ENCODE measurements at regions of chr1 and their contacts with region 1.

Region 1: GRCh38 chr1:212035123-212035834 is at the starts of genes DTL and INTS7:
- DNase-seq: peak; percentile 99 to 100 (median 99)
- H3K4me3 ChIP-seq: peak within 1 kb of the TSS; percentile 84 to 99 (median 95)
- H3K27ac ChIP-seq: peak within 1 kb of the TSS; percentile 72 to 90
- H3K4me1 ChIP-seq: peaks cover 8 to 48% (median 29%) of the 10 kb centered on the region in 4 experiments
- H3K27me3 ChIP-seq: no peaks in the 10 kb centered on the region

Region 2: GRCh38 chr1:211680752-211681327 is 354.4 kb before region 1 on chr1:
- CTCF ChIA-PET with region 1: interaction called, 25 read pairs
- POLR2A ChIA-PET with region 1: interaction called, 4 read pairs
- DNase-seq: peak; percentile 87 to 94 (median 93)
- H3K4me3 ChIP-seq: no peak overlapping the region
- H3K27ac ChIP-seq: no peak overlapping the region
- H3K4me1 ChIP-seq: peaks cover 0 to 4% (median 2%) of the 10 kb centered on the region in 4 experiments
- H3K27me3 ChIP-seq: peaks cover 0 to 2% (median 0%) of the 10 kb centered on the region in 5 experiments

Region 3: DNA sequence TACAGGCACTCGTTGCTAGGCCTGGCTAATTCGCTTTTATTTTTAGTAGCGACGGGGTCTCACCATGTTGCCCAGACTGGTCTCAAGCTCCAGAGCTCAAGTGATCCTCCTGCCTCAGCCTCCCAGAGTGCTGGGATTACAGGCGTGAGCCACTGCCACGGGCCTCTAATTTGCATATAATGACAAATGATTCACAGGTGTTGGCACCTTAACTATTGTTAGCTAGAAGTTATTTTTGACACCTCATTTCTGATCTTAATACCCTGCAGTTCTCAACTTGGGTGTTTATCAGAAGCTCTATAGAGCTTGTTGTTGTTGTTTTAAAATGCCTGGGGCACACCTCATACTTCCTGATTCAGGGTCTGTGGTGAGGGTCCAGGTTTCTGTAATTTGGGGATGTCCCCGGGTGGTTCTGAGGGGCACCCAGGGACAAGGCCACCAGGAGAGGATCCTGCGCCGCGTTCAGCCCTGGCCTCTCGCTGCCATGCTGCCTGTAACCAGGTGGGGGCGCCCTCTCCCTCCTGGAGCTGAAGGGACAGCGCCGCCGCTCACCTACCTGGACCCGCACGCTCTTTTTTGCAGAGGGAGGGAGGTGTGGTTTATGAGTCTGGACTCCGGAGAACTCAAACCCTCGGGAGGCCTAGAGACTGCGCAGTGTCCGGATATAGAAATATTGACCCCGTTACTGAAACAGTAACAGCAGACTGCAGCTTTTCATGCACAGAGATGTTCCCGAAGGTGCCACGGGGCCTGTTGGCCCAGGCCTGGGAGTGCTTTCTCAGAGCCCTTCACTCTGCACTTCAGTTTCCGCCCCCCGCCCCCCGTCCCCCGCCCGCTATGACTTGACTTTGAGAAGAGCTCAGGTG is 336.9 kb before region 1 on chr1:
- CTCF ChIA-PET with region 1: interaction called, 20 read pairs
- POLR2A ChIA-PET with region 1: no interaction called
- DNase-seq: peak; percentile 64 to 79 (median 77)
- H3K4me3 ChIP-seq: peak overlapping the region in 5 of 7 experiments; percentile 23 to 70 (median 51)
- H3K27ac ChIP-seq: no peak overlapping the region
- H3K4me1 ChIP-seq: peaks cover 0 to 25% (median 15%) of the 10 kb centered on the region in 4 experiments
- H3K27me3 ChIP-seq: no peaks in the 10 kb centered on the region

Region 4: GRCh38 chr1:211752951-211753486 is 282.3 kb before region 1 on chr1:
- CTCF ChIA-PET with region 1: no interaction called
- POLR2A ChIA-PET with region 1: no interaction called
- DNase-seq: no peak
- H3K4me3 ChIP-seq: no peak overlapping the region
- H3K27ac ChIP-seq: no peak overlapping the region
- H3K4me1 ChIP-seq: no peaks in the 10 kb centered on the region
- H3K27me3 ChIP-seq: no peaks in the 10 kb centered on the region

Region 5: DNA sequence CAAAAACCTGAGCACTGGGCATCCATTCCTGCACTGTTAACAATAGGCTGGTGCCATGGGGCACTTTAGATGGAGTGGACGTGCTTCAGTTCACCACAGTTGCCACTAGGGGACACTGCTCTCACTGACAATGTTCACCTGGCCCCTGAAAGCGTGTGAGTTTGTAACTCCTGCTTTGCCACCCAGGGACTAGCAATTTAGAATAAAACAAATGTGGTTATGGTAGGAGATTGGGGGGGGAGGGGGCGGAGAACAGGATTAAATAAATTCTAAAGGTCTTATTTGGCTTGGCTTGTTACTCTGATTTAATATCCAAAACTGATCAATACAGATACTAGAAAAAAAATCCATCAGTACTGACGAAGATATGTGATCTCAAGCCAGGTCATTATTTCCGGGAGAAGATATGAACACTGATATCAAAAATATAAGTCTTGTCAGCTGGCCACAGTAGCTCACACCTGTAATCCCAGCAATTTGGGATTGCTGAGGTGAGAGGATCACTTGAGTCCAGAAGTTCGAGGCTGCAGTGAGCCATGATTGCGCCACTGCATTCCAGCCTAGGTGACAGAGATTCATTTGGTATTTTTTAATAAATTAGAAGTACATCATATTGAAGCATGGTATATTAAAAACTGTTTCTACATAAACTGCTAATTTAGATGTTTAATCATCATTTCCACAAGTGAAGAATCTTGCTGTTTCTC is 23.1 kb before region 1 on chr1:
- CTCF ChIA-PET with region 1: interaction called, 24 read pairs
- POLR2A ChIA-PET with region 1: no interaction called
- DNase-seq: peak; percentile 65 to 76 (median 71)
- H3K4me3 ChIP-seq: no peak overlapping the region
- H3K27ac ChIP-seq: no peak overlapping the region
- H3K4me1 ChIP-seq: peaks cover 0 to 4% (median 1%) of the 10 kb centered on the region in 4 experiments
- H3K27me3 ChIP-seq: no peaks in the 10 kb centered on the region

Region 6: DNA sequence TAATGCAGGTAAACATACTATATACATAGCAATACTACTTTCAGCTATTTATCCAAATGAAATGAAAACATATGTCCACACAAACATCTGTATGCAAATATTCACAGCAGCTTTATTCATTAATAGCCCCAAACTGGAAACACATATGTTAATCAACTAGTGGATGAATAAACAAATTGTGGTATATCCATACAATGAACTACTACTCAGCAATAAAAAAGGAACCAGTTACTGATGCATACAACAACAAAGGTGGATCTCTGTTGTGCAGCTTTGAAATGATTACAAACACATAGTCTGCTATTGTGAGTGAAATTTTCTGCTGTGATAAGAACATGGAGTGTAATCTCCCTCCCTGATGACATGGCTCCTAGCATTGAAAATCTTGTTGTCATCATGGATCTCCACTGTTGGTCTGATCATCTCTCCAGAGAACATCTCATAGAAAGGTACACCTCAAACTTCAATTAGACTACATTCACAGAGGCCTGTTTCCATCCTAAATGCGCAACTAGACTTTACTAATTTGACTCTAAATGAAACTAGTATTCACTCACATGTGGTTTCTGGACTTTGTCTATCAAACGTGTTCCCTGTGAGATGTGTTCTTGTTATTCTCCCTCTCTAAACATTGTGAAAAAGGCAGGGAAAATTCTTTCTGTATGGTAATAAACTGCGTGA is 10.7 kb before region 1 on chr1:
- CTCF ChIA-PET with region 1: interaction called, 16 read pairs
- POLR2A ChIA-PET with region 1: no interaction called
- DNase-seq: no peak
- H3K4me3 ChIP-seq: no peak overlapping the region
- H3K27ac ChIP-seq: no peak overlapping the region
- H3K4me1 ChIP-seq: no peaks in the 10 kb centered on the region
- H3K27me3 ChIP-seq: no peaks in the 10 kb centered on the region

Region 7: GRCh38 chr1:212045981-212046380 is 10.7 kb after region 1 on chr1:
- CTCF ChIA-PET with region 1: interaction called, 11 read pairs
- POLR2A ChIA-PET with region 1: no interaction called
- DNase-seq: no peak
- H3K4me3 ChIP-seq: no peak overlapping the region
- H3K27ac ChIP-seq: no peak overlapping the region
- H3K4me1 ChIP-seq: peaks cover 0 to 1% (median 0%) of the 10 kb centered on the region in 4 experiments
- H3K27me3 ChIP-seq: no peaks in the 10 kb centered on the region

Region 8: DNA sequence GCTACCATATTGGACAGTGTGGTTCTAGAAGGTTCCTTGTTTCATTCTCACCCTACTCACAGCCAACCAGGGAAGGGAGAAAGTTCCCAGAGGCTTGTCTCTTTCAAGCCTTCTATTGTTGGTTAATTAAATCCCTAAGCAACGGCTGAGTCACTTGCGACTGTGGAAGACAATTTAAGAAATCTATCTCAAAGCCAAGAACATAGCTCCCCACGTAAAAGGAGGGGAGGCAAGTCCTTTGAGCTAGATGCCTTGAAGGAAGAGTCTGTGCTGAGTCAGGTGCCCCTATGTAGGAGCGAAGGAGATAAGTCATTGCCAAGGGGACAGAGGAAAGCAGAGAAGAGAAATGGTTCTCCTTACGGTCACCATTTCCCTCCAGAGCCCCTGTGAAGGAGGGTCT is 170.6 kb after region 1 on chr1:
- CTCF ChIA-PET with region 1: no interaction called
- POLR2A ChIA-PET with region 1: no interaction called
- DNase-seq: no peak
- H3K4me3 ChIP-seq: no peak overlapping the region
- H3K27ac ChIP-seq: no peak overlapping the region
- H3K4me1 ChIP-seq: peaks cover 0 to 4% (median 0%) of the 10 kb centered on the region in 4 experiments
- H3K27me3 ChIP-seq: no peaks in the 10 kb centered on the region

Region 9: GRCh38 chr1:212368073-212368484 is 332.8 kb after region 1 on chr1:
- CTCF ChIA-PET with region 1: interaction called, 13 read pairs
- POLR2A ChIA-PET with region 1: no interaction called
- DNase-seq: peak; percentile 75 to 89 (median 86)
- H3K4me3 ChIP-seq: no peak overlapping the region
- H3K27ac ChIP-seq: no peak overlapping the region
- H3K4me1 ChIP-seq: no peaks in the 10 kb centered on the region
- H3K27me3 ChIP-seq: no peaks in the 10 kb centered on the region